Ovary (tissue), 10 donors: ENCODE measurements at regions of chr15 and their contacts with region 1.

Region 1: DNA sequence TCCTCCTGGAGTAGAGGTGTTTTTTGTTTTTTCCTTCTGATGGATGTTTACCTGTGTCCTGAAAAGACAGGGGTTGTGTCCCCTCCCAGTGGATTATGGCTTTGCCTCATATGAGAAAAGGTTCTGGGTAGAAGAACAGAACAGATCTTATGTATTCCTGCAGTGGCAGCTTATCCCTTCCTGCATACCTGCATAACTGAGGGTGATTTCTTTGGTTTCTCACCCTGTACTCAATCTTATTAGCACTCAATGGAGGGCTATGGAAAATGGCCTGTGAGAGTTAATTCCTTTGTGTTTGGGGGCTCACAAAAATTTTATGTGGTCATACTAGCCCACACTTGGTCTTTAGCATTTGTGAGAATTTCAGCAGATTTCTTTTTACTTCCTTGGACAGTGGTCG is 482.0 kb upstream of the ONECUT1 start:
- DNase-seq: no peak
- H3K4me3 ChIP-seq: no peak overlapping the region
- H3K27ac ChIP-seq: no peak overlapping the region
- H3K4me1 ChIP-seq: no peaks in the 10 kb centered on the region
- H3K27me3 ChIP-seq: no peaks in the 10 kb centered on the region
- CTCF ChIP-seq: no peak
- EP300 ChIP-seq: no peak
- POLR2A ChIP-seq: no peak

Region 2: DNA sequence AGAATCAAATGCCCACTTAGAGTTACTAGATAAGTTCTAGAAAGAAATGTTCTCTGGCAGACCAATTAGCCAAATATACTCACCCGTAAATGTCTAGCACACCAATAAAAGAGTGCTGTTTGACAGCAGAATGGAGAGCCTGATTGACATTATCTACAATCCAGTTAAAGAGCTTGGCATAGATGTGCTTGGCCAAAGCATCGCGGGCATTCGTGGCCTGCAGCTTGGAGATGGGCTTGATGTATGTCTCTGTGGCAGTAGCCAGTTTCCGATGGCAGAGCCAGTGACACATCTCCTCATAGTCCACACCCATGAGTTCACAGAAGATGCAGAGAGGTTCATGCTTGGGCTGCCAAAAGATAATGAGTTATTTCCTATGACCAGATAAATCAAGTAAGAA is 875.0 kb before region 1 on chr15:
- intact Hi-C with region 1: no loop called
- DNase-seq: no peak
- H3K4me3 ChIP-seq: no peak overlapping the region
- H3K27ac ChIP-seq: no peak overlapping the region
- H3K4me1 ChIP-seq: no peaks in the 10 kb centered on the region
- H3K27me3 ChIP-seq: no peaks in the 10 kb centered on the region
- CTCF ChIP-seq: no peak
- EP300 ChIP-seq: no peak
- POLR2A ChIP-seq: no peak

Region 3: DNA sequence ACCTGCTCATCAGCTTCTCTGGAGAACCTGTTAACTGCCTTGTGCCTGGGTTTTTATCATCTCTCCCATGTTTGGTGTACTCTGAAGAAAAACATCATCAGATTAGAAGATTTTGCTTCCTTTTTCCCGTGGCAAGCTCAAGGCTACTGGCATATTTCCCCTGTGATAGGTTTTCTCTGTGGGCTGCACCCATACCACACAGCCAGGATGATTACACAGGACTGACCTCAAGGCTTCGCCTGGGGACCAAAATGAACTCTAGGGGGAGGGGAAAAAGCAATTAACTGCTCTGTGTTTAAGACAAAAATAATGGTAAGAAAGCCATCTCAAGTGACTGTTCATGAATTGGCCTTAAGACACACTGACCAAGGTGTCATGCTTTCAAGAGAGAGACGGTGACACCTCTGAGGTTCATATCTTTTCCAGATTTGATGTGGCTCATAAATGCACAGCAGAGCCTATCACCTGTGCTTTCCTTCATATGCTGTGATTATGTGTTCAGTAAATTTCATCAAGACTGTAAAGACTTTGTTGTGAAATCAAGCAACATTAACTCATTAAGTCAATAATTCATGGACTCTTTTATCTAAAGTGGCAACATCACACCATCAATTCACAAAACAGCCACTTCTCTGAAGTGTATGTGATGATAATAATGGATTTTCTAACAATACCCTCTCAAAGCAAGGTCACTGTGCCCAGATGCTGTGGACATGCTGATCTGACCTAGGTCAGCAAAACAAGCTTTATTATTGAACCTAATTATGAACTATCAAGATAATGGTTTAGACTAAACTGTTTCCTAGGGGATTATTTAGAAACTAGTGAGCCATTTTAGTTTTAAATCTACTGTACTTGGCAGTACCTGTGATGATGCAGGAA is 59.5 kb after region 1 on chr15:
- intact Hi-C with region 1: loop called in 1 of 4 experiments (anchors 10 kb)
- DNase-seq: no peak
- H3K4me3 ChIP-seq: no peak overlapping the region
- H3K27ac ChIP-seq: no peak overlapping the region
- H3K4me1 ChIP-seq: no peaks in the 10 kb centered on the region
- H3K27me3 ChIP-seq: no peaks in the 10 kb centered on the region
- CTCF ChIP-seq: no peak
- EP300 ChIP-seq: no peak
- POLR2A ChIP-seq: no peak

Region 4: DNA sequence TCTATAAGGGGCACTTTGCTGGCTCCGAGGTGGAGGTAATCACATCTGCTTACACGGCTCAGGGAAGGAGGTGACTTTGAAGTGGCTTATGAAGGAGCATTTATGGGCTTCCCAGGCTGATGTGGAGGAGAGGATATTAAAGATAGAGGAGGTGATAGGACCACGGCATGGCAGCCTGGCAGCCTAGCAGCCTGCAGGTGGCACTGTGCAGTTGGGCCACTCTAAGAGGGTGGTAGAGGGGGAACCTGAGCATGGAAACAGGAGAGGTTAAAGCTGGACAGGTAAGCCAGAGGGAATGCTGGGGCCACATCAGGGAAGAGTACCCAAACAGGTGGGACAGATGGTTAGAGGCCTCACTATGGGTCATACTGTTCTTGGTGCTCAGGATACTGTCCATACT is 112.3 kb after region 1 on chr15:
- intact Hi-C with region 1: no loop called
- DNase-seq: no peak
- H3K4me3 ChIP-seq: no peak overlapping the region
- H3K27ac ChIP-seq: no peak overlapping the region
- H3K4me1 ChIP-seq: no peaks in the 10 kb centered on the region
- H3K27me3 ChIP-seq: no peaks in the 10 kb centered on the region
- CTCF ChIP-seq: no peak
- EP300 ChIP-seq: no peak
- POLR2A ChIP-seq: no peak